Aorta (tissue), 5 donors: ENCODE measurements at regions of chr15 and their contacts with region 1.

Region 1: GRCh38 chr15:26910715-26911114 is 43.9 kb downstream of the GABRA5 start:
- DNase-seq: no peak
- ATAC-seq: no peak
- H3K4me3 ChIP-seq: no peak overlapping the region
- H3K27ac ChIP-seq: no peak overlapping the region
- H3K4me1 ChIP-seq: no peaks in the 10 kb centered on the region
- H3K27me3 ChIP-seq: no peaks in the 10 kb centered on the region

Region 2: GRCh38 chr15:26852980-26853379 is 57.7 kb before region 1 on chr15:
- intact Hi-C with region 1: loop called in 1 of 2 experiments (anchors 10 kb)
- DNase-seq: no peak
- ATAC-seq: no peak
- H3K4me3 ChIP-seq: no peak overlapping the region
- H3K27ac ChIP-seq: no peak overlapping the region
- H3K4me1 ChIP-seq: no peaks in the 10 kb centered on the region
- H3K27me3 ChIP-seq: no peaks in the 10 kb centered on the region